Activated T-helper 1 cell treated with anti-CD3 and anti-CD28 coated beads, Interleukin-12 subunit alpha, Interleukin-12 subunit beta, Interleukin-2, Interleukin-4 antibody, amounts not matched to agents 30 ng/mL and 10 ng/mL and 1 ng/mL, durations not matched to agents 14 hours and 24 hours and 36 hours (primary cell): ENCODE measurements at regions of chr3 and their contacts with region 1.

Region 1: DNA sequence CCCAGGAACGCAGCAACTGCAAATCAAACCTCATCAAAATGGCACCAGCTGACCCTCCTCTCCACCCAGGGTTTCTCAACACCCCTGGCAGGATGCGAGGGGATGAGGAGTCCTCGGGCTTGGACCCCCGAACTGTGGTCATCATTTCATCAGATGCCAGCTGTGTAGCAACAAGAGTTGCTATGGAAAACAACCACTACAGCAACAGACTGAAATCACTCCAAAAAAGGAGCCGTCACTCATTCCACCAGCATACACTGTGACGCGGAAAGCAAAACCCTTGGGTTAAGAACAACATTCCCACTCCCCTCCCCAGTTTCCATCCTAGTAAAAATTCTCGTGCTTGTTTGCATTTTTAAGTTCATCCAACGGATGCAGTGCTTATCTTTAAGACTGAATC is 40.1 kb downstream of the VGLL4 start:
- DNase-seq: no peak
- H3K4me3 Mint-ChIP-seq: no peak overlapping the region
- H3K27ac Mint-ChIP-seq: no peak overlapping the region
- H3K4me1 Mint-ChIP-seq: peaks cover 41% of the 10 kb centered on the region
- H3K27me3 Mint-ChIP-seq: no peaks in the 10 kb centered on the region

Region 2: DNA sequence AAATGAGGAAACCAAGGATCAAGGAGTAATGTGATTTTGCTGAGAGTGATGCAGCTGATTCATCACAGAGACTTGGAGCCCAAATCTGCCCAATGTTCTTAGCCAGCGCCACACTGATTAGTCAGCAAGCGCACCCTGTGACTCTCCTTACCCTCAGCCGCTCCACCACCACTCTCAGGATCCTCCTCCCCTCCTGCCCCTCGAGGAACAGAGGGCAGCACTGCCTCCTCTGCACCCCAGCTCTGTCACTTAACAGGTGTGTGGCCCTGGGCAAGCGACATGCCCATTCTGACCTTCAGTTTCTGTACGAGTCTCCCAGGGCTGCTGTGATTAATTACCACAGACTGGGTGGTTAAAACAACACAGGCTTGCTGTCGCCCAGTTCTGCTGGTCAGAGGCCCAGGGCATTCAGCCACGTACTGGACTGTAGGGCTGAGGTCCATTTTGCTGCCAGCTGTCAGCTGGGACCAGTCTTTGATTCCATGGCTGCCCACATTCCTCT is 485.4 kb before region 1 on chr3:
- intact Hi-C with region 1: no loop called
- DNase-seq: no peak
- H3K4me3 Mint-ChIP-seq: no peak overlapping the region
- H3K27ac Mint-ChIP-seq: no peak overlapping the region
- H3K4me1 Mint-ChIP-seq: no peaks in the 10 kb centered on the region
- H3K27me3 Mint-ChIP-seq: peaks cover 5% of the 10 kb centered on the region

Region 3: DNA sequence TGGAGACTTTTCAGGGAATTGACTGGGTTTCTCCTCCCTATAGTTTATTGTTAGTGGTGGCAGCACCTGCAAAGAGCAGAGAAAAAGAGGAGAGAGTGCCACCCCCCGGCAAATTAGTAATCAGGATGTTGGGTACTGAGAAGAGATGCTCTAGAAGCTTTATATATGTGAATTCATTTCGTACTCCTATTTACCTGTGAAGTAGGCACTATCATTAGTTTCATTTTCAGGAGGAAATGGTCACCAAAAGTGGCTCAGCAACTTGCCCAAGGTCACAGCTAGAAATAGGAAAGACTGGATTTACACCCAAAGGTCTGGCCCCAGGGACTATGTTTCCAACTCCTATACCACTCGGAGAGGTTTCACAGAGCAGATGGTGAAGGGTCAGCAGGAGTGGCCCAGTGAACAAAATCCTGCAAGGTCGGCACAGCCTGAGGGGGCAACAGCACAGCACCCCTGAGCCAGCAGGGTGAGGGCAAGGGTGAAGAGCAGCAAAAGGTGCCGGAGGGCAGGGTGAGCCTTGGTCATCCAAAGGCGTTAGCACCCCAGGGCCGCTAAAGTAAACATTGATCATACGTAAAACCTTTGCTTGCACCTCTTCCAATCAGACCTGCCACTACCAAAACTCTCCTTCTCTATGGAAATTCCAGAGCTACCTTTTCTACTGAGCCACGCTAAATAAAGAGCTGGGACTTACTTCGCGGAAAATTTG is 16.5 kb after region 1 on chr3:
- intact Hi-C with region 1: loop called (anchors 2 kb)
- DNase-seq: no peak
- H3K4me3 Mint-ChIP-seq: peak overlapping the region; percentile 21
- H3K27ac Mint-ChIP-seq: no peak overlapping the region
- H3K4me1 Mint-ChIP-seq: peaks cover 74% of the 10 kb centered on the region
- H3K27me3 Mint-ChIP-seq: no peaks in the 10 kb centered on the region

Region 4: DNA sequence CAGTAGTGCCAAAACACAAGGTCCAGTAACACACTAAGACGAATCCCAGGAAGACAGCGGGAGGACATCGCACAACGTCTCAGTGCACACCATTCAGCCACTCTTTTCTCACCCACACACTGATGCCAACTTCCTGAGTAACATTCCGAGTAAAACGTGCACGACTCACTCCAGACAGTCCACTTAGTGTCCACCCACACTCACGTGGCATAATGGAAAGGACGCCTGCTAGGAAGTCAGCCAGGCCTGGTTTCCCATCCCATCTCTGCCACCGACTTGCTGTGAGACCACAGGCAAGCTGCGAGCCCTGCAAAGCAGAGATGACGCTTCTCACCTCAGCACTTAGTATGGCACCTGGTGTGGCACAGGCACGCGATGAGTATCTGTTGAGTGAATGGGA is 76.9 kb after region 1 on chr3:
- intact Hi-C with region 1: no loop called
- DNase-seq: no peak
- H3K4me3 Mint-ChIP-seq: no peak overlapping the region
- H3K27ac Mint-ChIP-seq: no peak overlapping the region
- H3K4me1 Mint-ChIP-seq: no peaks in the 10 kb centered on the region
- H3K27me3 Mint-ChIP-seq: no peaks in the 10 kb centered on the region